ENCODE measurements at regions of chrX and their contacts with region 1.

Region 1: DNA sequence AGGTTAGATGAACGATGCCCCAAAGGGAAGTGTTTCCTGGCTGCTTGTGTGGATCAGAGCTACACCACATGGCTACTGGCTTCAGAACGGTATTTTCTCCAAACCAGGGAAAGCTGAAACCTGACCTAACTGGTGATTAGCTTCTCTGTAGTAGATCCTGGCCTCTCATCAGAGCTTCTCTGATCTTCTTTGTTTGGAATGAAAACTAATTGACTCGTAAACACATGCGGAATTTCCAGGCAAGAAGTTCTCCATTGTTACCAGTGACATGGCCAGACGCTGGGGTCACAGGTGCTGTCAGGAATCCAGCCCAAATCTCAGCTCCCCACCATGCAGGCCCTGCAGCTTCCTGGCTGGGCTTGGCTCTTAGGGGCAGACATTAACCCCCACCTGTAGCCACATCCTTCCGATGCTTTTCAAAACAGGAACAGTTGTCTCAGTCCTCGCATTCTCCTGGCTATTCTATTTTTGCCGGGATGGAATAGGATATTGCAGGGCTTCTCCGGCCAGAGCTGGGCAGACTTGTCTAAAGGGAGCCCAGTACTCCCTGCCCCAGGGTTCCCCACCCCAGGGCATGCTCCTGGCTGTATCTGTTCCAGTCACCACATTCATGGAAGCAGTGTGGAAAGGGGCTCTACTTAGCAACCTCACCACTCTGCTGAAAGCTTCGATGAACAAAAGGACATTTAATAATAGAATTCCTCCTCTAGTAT is 305.4 kb upstream of the F9 start:
- DNase-seq: no peak

Region 2: GRCh38 chrX:138191998-138192397 is 1033.1 kb before region 1 on chrX:
- intact Hi-C with region 1: loop called in 1 of 2 experiments (anchors 5 kb)
- DNase-seq: no peak